ENCODE measurements at regions of chr21 and their contacts with region 1.

Region 1: DNA sequence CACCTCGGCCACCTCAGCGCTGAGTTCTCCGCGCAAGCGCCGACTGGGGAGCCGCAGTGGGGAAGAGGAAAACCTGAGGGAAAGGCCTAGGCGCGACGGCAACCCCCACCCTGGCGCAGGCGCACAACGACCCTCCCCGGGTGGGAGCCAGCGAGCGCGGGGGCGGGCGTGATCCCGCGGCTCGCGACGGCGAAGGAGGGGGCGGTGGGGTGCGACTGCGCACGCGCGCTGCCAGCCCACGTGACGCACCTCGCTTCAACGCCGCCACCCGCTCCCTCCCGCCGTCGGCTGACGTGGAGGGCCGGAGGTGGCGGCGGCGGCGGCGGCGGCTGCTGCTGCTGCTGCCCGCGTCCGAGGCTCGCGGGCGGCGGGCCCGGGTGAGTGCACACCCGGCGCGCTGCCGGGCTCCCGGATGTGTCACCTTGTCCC is at the starts of genes PIGP and TTC3:
- DNase-seq: peak; percentile 99
- ATAC-seq: peak; percentile 63
- H3K4me3 Mint-ChIP-seq: peak within 1 kb of the TSS; percentile 87
- H3K27ac Mint-ChIP-seq: peak within 1 kb of the TSS; percentile 93
- H3K4me1 Mint-ChIP-seq: peaks cover 44% of the 10 kb centered on the region
- H3K27me3 Mint-ChIP-seq: no peaks in the 10 kb centered on the region
- CTCF ChIP-seq: no peak
- total RNA-seq, gene PIGP: 17.3 and 17.7 TPM in 2 replicates
- total RNA-seq, gene TTC3: 61.1 and 69.8 TPM in 2 replicates

Region 2: GRCh38 chr21:36966066-36966820 is 106.8 kb before region 1 on chr21 and contains the start of gene HLCS:
- CTCF ChIA-PET with region 1: no interaction called
- POLR2A ChIA-PET with region 1: interaction called, 3 read pairs
- intact Hi-C with region 1: loop called (anchors 1 kb)
- DNase-seq: peak; percentile 77
- ATAC-seq: peak; percentile 92
- H3K4me3 Mint-ChIP-seq: peak within 1 kb of the TSS; percentile 85
- H3K27ac Mint-ChIP-seq: peak within 1 kb of the TSS; percentile 80
- H3K4me1 Mint-ChIP-seq: peaks cover 20% of the 10 kb centered on the region
- H3K27me3 Mint-ChIP-seq: no peaks in the 10 kb centered on the region
- CTCF ChIP-seq: no peak
- total RNA-seq, gene HLCS: 8.1 and 10.6 TPM in 2 replicates

Region 3: GRCh38 chr21:36989699-36990507 is 83.1 kb before region 1 on chr21:
- CTCF ChIA-PET with region 1: no interaction called
- POLR2A ChIA-PET with region 1: interaction called, 11 read pairs
- intact Hi-C with region 1: loop called (anchors 1 kb)
- DNase-seq: peak; percentile 91
- ATAC-seq: peak; percentile 92
- H3K4me3 Mint-ChIP-seq: peak overlapping the region; percentile 83
- H3K27ac Mint-ChIP-seq: peak overlapping the region; percentile 80
- H3K4me1 Mint-ChIP-seq: peaks cover 10% of the 10 kb centered on the region
- H3K27me3 Mint-ChIP-seq: no peaks in the 10 kb centered on the region
- CTCF ChIP-seq: peak; percentile 27

Region 4: DNA sequence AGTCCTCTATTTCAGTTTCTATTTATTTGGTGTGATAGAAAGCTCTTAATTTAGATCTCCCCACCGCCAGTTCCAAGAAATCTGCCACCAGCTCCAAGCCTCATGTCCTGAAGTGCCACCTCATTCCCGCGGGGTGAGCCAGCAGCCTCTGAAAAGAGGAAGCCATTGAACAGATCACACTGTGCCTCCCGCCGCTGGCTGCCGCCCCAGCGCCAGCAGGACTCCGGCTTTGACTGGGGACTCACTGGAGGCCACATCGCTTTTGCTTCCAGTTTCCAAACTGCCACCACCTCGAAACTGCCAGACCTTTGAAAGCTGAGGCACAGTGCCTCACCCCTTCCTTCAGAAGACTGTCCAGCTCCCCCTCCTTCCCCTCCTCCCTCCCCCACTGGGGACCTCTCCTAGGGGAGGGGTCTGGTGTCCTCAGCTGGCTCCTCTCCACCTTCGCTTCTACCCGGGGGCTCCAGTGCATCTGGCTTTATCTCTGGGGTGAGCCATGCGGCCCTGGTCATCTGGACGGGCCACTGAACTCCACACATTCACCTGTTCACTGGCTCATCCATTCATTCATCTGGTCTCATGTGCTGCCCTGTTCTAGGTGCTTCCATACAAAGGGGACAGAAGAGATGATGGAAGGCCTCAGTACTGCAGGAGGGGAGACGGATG is 135.2 kb after region 1 on chr21:
- CTCF ChIA-PET with region 1: no interaction called
- POLR2A ChIA-PET with region 1: no interaction called
- intact Hi-C with region 1: loop called (anchors 2 kb)
- DNase-seq: peak; percentile 47
- ATAC-seq: peak; percentile 65
- H3K4me3 Mint-ChIP-seq: peak overlapping the region; percentile 77
- H3K27ac Mint-ChIP-seq: peak overlapping the region; percentile 84
- H3K4me1 Mint-ChIP-seq: peaks cover 45% of the 10 kb centered on the region
- H3K27me3 Mint-ChIP-seq: no peaks in the 10 kb centered on the region
- CTCF ChIP-seq: no peak

Region 5: GRCh38 chr21:37267269-37268184 is 194.5 kb after region 1 on chr21 and contains the start of gene VPS26C:
- CTCF ChIA-PET with region 1: no interaction called
- POLR2A ChIA-PET with region 1: interaction called, 5 read pairs
- intact Hi-C with region 1: loop called (anchors 1 kb)
- DNase-seq: peak; percentile 94
- ATAC-seq: peak; percentile 86
- H3K4me3 Mint-ChIP-seq: peak within 1 kb of the TSS; percentile 96
- H3K27ac Mint-ChIP-seq: peak within 1 kb of the TSS; percentile 97
- H3K4me1 Mint-ChIP-seq: peaks cover 29% of the 10 kb centered on the region
- H3K27me3 Mint-ChIP-seq: peaks cover 6% of the 10 kb centered on the region
- CTCF ChIP-seq: no peak
- total RNA-seq, gene VPS26C: 42.5 and 45.2 TPM in 2 replicates

Region 6: GRCh38 chr21:38120984-38121855 is 1048.2 kb after region 1 on chr21:
- CTCF ChIA-PET with region 1: no interaction called
- POLR2A ChIA-PET with region 1: no interaction called
- intact Hi-C with region 1: no loop called
- DNase-seq: no peak
- ATAC-seq: no peak
- H3K4me3 Mint-ChIP-seq: no peak overlapping the region
- H3K27ac Mint-ChIP-seq: no peak overlapping the region
- H3K4me1 Mint-ChIP-seq: no peaks in the 10 kb centered on the region
- H3K27me3 Mint-ChIP-seq: no peaks in the 10 kb centered on the region
- CTCF ChIP-seq: no peak